ENCODE measurements at regions of chr6 and their contacts with region 1.

Region 1: GRCh38 chr6:43149265-43149664 is 21.8 kb upstream of the SRF start:
- DNase-seq: no peak
- ATAC-seq: no peak
- H3K4me3 ChIP-seq: no peak overlapping the region
- H3K4me1 ChIP-seq: peaks cover 14% of the 10 kb centered on the region
- CTCF ChIP-seq: no peak

Region 2: GRCh38 chr6:42907336-42907735 is 241.9 kb before region 1 on chr6:
- intact Hi-C with region 1: loop called (anchors 5 to 10 kb)
- DNase-seq: no peak
- ATAC-seq: no peak
- H3K4me3 ChIP-seq: no peak overlapping the region
- H3K4me1 ChIP-seq: peaks cover 5% of the 10 kb centered on the region
- CTCF ChIP-seq: no peak

Measured in mucosa of descending colon (tissue), 3 donors.